Naive thymus-derived CD4-positive, alpha-beta T cell (primary cell): ENCODE measurements at regions of chr1 and their contacts with region 1.

Region 1: DNA sequence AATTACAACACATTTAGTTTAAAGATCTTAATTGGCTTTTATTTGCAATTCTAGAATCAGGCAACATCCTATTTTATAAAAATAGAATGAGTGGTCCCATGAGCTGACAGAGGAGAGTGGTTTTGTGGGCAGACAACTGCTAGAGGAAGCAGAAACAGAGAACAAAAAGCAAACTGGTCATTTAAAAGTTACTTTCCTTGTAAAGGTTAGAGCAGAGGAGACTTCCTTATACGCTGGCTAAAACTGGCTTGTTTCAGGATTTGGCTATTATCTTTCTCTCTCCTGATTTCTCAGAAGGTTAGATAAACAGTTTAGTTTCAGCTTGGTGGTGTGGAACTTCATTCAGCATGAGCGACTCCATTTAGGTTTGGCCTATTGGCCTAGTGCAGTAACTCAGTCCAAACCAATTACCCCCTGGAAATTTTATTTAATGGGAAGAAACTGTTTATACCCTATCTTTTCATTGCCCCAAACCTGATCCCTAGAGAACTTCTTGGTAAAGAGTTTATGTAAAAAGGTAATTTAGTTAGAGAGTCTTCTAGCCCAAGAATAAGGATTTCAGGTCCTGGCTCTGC is 32.2 kb upstream of the IL20 start:
- DNase-seq: no peak
- ATAC-seq: no peak
- H3K4me3 ChIP-seq: no peak overlapping the region
- H3K4me3 Mint-ChIP-seq: no peak overlapping the region
- H3K27ac ChIP-seq: no peak overlapping the region
- H3K27ac Mint-ChIP-seq: no peak overlapping the region
- H3K4me1 ChIP-seq: peaks cover 18 to 22% of the 10 kb centered on the region in 2 donors
- H3K4me1 Mint-ChIP-seq: peaks cover 24 to 51% (median 39%) of the 10 kb centered on the region in 7 donors
- H3K27me3 ChIP-seq: no peaks in the 10 kb centered on the region
- H3K27me3 Mint-ChIP-seq: peaks cover 0 to 51% (median 5%) of the 10 kb centered on the region in 5 donors

Region 2: DNA sequence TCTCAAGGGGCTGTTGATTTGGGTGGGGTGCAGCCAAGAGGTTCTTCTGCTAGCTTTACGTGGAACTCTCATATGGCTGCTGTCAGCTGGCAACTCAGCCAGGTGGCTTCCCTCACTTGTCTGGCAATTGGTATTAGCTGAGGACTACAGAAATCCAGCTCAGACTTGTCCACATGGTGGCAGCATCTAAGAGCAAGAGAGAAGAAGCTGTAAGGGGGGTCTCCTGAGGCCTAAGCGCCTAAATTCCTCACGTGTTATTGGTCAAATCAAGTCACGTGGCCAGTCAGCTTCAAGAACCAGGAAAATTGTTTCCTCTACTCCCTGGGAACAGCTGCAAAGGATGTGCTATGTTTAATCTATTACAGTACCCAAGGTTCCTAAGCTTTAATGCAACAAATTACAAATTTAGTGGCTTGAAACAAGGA is 202.1 kb before region 1 on chr1:
- CTCF ChIA-PET with region 1: no interaction called
- POLR2A ChIA-PET with region 1: no interaction called
- intact Hi-C with region 1: no loop called
- DNase-seq: no peak
- ATAC-seq: no peak
- H3K4me3 ChIP-seq: no peak overlapping the region
- H3K4me3 Mint-ChIP-seq: no peak overlapping the region
- H3K27ac ChIP-seq: no peak overlapping the region
- H3K27ac Mint-ChIP-seq: no peak overlapping the region
- H3K4me1 ChIP-seq: peaks cover 8 to 15% of the 10 kb centered on the region in 2 donors
- H3K4me1 Mint-ChIP-seq: peaks cover 8 to 15% (median 12%) of the 10 kb centered on the region in 7 donors
- H3K27me3 ChIP-seq: no peaks in the 10 kb centered on the region
- H3K27me3 Mint-ChIP-seq: peaks cover 7 to 23% (median 9%) of the 10 kb centered on the region in 5 donors

Region 3: GRCh38 chr1:206814716-206815341 is 18.4 kb before region 1 on chr1:
- CTCF ChIA-PET with region 1: interaction called, 7 read pairs
- POLR2A ChIA-PET with region 1: interaction called, 6 read pairs
- intact Hi-C with region 1: loop called (anchors 1 to 2 kb)
- DNase-seq: no peak
- ATAC-seq: peak; percentile 38
- H3K4me3 ChIP-seq: no peak overlapping the region
- H3K4me3 Mint-ChIP-seq: no peak overlapping the region
- H3K27ac ChIP-seq: no peak overlapping the region
- H3K27ac Mint-ChIP-seq: peak overlapping the region in 7 of 9 donors; percentile 8 to 97 (median 41)
- H3K4me1 ChIP-seq: peaks cover 0 to 14% of the 10 kb centered on the region in 2 donors
- H3K4me1 Mint-ChIP-seq: peaks cover 20 to 53% (median 44%) of the 10 kb centered on the region in 7 donors
- H3K27me3 ChIP-seq: no peaks in the 10 kb centered on the region
- H3K27me3 Mint-ChIP-seq: no peaks in the 10 kb centered on the region

Region 4: GRCh38 chr1:206821493-206821892 is 11.7 kb before region 1 on chr1:
- CTCF ChIA-PET with region 1: interaction called, 6 read pairs
- POLR2A ChIA-PET with region 1: interaction called, 11 read pairs
- intact Hi-C with region 1: loop called (anchors 1 to 2 kb)
- DNase-seq: no peak
- ATAC-seq: no peak
- H3K4me3 ChIP-seq: no peak overlapping the region
- H3K4me3 Mint-ChIP-seq: no peak overlapping the region
- H3K27ac ChIP-seq: no peak overlapping the region
- H3K27ac Mint-ChIP-seq: no peak overlapping the region
- H3K4me1 ChIP-seq: peaks cover 0 to 23% of the 10 kb centered on the region in 2 donors
- H3K4me1 Mint-ChIP-seq: peaks cover 23 to 38% (median 34%) of the 10 kb centered on the region in 7 donors
- H3K27me3 ChIP-seq: no peaks in the 10 kb centered on the region
- H3K27me3 Mint-ChIP-seq: no peaks in the 10 kb centered on the region

Region 5: DNA sequence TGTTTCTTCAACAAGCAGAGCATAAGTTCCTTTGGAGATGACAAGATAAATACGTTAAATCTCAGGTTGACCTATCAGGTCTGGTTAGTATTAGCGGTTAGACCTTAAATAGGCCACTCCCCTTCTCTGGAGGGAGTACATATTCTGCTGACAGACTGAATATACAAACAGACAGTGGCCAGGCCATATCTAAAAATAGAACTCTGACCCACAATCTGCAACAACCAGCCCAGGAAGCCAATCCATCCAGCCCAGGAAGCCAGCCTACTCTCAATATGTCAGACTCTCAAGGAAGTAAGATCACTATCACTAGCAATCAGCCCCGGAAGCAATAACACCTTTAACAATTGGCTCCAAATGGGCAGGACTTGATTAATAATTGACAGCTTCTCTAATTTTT is 38.9 kb after region 1 on chr1:
- CTCF ChIA-PET with region 1: no interaction called
- POLR2A ChIA-PET with region 1: no interaction called
- intact Hi-C with region 1: no loop called
- DNase-seq: no peak
- ATAC-seq: no peak
- H3K4me3 ChIP-seq: no peak overlapping the region
- H3K4me3 Mint-ChIP-seq: no peak overlapping the region
- H3K27ac ChIP-seq: no peak overlapping the region
- H3K27ac Mint-ChIP-seq: no peak overlapping the region
- H3K4me1 ChIP-seq: no peaks in the 10 kb centered on the region
- H3K4me1 Mint-ChIP-seq: peaks cover 0 to 7% (median 0%) of the 10 kb centered on the region in 7 donors
- H3K27me3 ChIP-seq: peaks cover 0 to 2% of the 10 kb centered on the region in 2 donors
- H3K27me3 Mint-ChIP-seq: peaks cover 0 to 23% (median 0%) of the 10 kb centered on the region in 5 donors